Gastrocnemius medialis (tissue), 4 donors: ENCODE measurements at regions of chr15 and their contacts with region 1.

Region 1: GRCh38 chr15:34065941-34066340 is 26.9 kb upstream of the AVEN start:
- DNase-seq: no peak
- ATAC-seq: no peak
- H3K4me3 ChIP-seq: no peak overlapping the region
- H3K27ac ChIP-seq: no peak overlapping the region
- H3K4me1 ChIP-seq: peaks cover 0 to 6% of the 10 kb centered on the region in 2 donors
- H3K27me3 ChIP-seq: no peaks in the 10 kb centered on the region
- CTCF ChIP-seq: no peak
- POLR2A ChIP-seq: no peak

Region 2: DNA sequence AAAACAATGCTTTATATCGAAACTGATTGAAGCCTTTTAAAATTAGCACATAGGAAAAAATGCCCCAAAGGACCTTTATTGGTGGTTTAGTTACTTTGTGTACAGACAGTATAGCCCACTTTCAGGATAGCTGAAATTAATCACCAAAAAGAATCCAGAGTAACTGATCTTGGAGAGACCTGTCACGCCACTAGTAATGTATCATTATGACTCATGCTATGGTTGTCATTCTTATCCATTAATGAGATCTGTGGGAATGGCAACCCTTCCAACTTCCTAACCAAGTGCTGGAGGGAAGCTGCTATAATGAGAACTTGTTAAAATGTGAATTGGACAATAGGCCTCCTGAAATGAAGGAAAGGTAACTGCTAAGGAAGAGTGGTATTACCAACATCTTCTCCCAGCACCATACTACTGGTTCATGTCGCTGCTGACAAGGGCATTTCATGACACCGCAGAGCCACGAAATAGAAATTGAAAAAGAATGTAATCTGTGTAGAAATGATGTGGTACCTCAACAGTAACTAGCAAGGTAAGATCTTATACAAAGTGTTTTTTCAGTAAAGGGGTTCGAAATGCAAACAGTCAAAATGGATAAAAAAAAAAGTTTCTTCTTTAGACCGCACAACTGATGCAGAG is 151.8 kb after region 1 on chr15:
- in situ Hi-C with region 1: loop called (anchors 5 to 10 kb)
- intact Hi-C with region 1: no loop called
- DNase-seq: no peak
- ATAC-seq: no peak
- H3K4me3 ChIP-seq: no peak overlapping the region
- H3K27ac ChIP-seq: no peak overlapping the region
- H3K4me1 ChIP-seq: no peaks in the 10 kb centered on the region
- H3K27me3 ChIP-seq: no peaks in the 10 kb centered on the region
- CTCF ChIP-seq: no peak
- POLR2A ChIP-seq: no peak